H1 (cell line): ENCODE measurements at regions of chr4 and their contacts with region 1.

Region 1: DNA sequence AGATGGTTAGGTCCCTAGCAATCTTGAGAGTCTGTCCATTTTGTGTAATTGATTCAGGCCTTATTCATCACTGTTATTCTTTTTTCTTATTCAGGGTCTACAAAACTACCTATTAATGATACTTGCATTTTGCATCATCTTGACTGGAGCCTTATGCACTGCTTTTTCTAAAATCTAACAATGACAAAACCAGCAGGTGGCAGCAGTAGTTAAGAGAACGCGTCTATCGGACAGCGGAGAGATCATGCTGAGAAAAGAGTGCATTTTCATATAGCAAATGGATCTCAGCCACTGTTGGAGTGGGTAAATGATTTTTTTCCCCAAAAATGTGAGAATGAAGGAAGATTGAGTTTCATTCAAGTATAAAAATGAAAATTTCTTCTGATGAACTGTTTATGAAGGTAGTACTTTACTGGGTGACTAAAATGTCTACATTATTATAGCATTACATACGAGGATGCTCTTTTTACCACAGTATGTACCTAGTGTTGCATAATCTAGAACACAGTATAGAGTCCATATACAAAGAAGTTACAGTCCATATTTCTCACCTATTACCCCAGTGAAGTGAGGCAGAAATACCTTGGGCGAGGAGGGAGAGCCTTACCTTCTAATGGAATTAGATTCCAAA is 43.2 kb downstream of the TMEM144 start:
- DNase-seq: no peak
- H3K4me3 ChIP-seq: no peak overlapping the region
- H3K27ac ChIP-seq: no peak overlapping the region
- H3K4me1 ChIP-seq: peaks cover 0 to 4% (median 2%) of the 10 kb centered on the region in 4 experiments; a peak in 2 of 7 replicates
- H3K27me3 ChIP-seq: no peaks in the 10 kb centered on the region
- CTCF ChIP-seq: peak in 2 of 3 experiments; percentile 57 to 62; a peak in 3 of 4 replicates
- EP300 ChIP-seq: no peak
- POLR2A ChIP-seq: no peak
- RAD21 ChIP-seq: peak; percentile 71 to 80

Region 2: DNA sequence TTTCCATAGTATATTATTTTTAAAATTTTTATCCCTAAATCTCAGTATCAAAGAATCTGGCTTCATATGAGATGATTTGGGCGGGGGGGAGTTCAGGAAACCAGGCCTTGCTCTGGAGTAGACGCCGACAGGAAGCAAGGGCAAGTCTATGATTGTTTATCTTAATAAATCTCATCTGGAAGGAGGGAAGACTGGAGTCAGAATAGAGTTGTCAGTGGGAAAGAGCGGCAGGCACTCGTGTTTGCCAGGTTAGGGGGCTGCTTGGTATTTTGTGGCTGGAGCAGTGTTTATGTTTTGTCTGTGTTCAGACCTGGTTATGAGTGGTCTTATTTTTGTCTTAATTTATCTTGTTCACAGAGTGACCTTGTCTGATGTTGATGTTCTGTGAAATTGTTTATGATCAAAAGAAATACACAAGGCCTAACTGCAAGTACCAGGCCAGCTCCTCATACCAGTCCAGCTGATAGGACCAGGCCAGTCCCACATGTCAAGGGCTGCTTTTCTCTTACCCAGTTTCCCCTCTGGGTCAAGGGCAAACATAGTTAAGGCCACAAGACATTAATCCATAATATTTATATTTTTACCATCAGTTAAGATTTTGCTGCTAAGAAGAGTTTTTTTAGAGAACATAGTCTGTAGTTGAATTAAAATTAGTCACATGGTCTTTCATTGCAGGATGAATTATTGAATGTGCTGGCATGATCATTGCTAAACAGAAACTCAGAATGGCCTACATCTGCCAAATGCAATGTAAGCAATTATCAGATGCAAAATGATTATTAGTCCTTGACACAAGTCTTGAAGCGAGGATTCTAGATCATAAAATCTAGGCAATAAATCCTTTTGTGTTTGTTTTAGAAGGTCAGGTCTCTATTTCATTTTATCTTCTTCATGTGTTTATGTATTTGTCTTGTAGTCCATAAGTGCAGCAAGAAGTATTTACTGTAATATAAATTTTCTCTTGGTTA is 257.1 kb before region 1 on chr4:
- CTCF ChIA-PET with region 1: no interaction called
- POLR2A ChIA-PET with region 1: no interaction called
- DNase-seq: no peak
- H3K4me3 ChIP-seq: no peak overlapping the region
- H3K27ac ChIP-seq: no peak overlapping the region
- H3K4me1 ChIP-seq: no peaks in the 10 kb centered on the region
- H3K27me3 ChIP-seq: no peaks in the 10 kb centered on the region
- CTCF ChIP-seq: no peak
- EP300 ChIP-seq: no peak
- POLR2A ChIP-seq: no peak
- RAD21 ChIP-seq: no peak

Region 3: GRCh38 chr4:158161551-158162354 is 91.7 kb before region 1 on chr4:
- CTCF ChIA-PET with region 1: no interaction called
- POLR2A ChIA-PET with region 1: no interaction called
- DNase-seq: no peak
- H3K4me3 ChIP-seq: no peak overlapping the region
- H3K27ac ChIP-seq: no peak overlapping the region
- H3K4me1 ChIP-seq: no peaks in the 10 kb centered on the region
- H3K27me3 ChIP-seq: no peaks in the 10 kb centered on the region
- CTCF ChIP-seq: no peak
- EP300 ChIP-seq: no peak
- POLR2A ChIP-seq: no peak
- RAD21 ChIP-seq: no peak

Region 4: DNA sequence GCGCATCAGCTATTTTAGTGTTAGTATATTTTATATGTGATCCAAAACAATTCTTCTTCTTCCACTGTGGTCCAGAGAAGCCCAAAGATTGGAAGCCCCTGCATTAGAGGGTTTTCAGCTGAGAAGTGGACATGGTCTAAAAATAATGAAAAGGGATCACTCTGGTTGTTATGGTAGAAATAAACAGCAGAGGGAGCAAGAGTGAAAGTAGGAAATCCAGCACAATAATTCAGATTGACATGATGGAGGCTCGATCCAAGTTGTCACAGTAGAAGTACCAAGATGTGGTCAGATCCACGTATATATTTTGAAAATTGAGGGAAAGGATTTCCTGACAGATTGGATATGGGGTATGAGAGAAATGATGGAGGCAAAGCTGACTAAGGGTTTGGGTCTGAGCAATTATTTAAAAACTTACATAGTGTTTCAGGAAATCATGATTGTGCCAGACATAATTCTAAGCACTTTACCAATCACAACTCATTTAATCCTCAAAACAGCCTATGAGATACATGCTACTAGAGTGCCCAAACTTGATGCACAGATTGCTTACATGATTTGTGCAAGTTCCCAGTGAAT is 60.2 kb before region 1 on chr4:
- CTCF ChIA-PET with region 1: interaction called, 102 read pairs
- POLR2A ChIA-PET with region 1: no interaction called
- DNase-seq: no peak
- H3K4me3 ChIP-seq: no peak overlapping the region
- H3K27ac ChIP-seq: no peak overlapping the region
- H3K4me1 ChIP-seq: no peaks in the 10 kb centered on the region
- H3K27me3 ChIP-seq: no peaks in the 10 kb centered on the region
- CTCF ChIP-seq: peak in 2 of 3 experiments; percentile 43 to 62; a peak in 2 of 4 replicates
- EP300 ChIP-seq: no peak
- POLR2A ChIP-seq: no peak
- RAD21 ChIP-seq: peak; percentile 49 to 51

Region 5: GRCh38 chr4:158243071-158243470 is 10.4 kb before region 1 on chr4:
- CTCF ChIA-PET with region 1: interaction called, 11 read pairs
- POLR2A ChIA-PET with region 1: no interaction called
- DNase-seq: no peak
- H3K4me3 ChIP-seq: no peak overlapping the region
- H3K27ac ChIP-seq: no peak overlapping the region
- H3K4me1 ChIP-seq: peaks cover 0 to 3% (median 0%) of the 10 kb centered on the region in 4 experiments; a peak in 1 of 7 replicates
- H3K27me3 ChIP-seq: no peaks in the 10 kb centered on the region
- CTCF ChIP-seq: no peak
- EP300 ChIP-seq: no peak
- POLR2A ChIP-seq: no peak
- RAD21 ChIP-seq: no peak

Region 6: DNA sequence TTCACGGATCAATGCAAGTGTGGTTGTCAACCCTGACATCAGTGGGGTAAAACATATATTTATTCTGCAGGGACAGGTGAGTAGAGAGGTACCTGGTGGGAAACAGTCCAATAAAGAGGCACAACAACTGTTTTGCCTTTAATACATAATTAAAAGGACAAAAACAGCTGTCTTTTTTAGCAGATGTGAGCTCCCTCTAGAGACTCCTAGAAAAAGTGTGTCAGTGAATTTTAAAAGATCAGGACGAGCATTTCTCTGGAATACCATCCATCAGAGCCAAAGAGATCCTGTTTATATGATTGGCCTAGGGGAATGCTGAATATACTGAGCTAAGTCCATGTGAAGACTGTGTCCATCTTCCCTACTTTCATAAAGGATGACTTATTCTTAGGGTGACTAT is 15.1 kb after region 1 on chr4:
- CTCF ChIA-PET with region 1: interaction called, 15 read pairs
- POLR2A ChIA-PET with region 1: no interaction called
- DNase-seq: no peak
- H3K4me3 ChIP-seq: no peak overlapping the region
- H3K27ac ChIP-seq: no peak overlapping the region
- H3K4me1 ChIP-seq: peaks cover 0 to 3% (median 0%) of the 10 kb centered on the region in 4 experiments; a peak in 1 of 7 replicates
- H3K27me3 ChIP-seq: no peaks in the 10 kb centered on the region
- CTCF ChIP-seq: peak in 1 of 3 experiments; percentile 22; a peak in 1 of 4 replicates
- EP300 ChIP-seq: no peak
- POLR2A ChIP-seq: no peak
- RAD21 ChIP-seq: 0 out of 4 replicates have a peak, but pooled peaks of 1 of the 2 experiments have one; percentile 13